Vagina (tissue), 2 donors: ENCODE measurements at regions of chr1 and their contacts with region 1.

Region 1: DNA sequence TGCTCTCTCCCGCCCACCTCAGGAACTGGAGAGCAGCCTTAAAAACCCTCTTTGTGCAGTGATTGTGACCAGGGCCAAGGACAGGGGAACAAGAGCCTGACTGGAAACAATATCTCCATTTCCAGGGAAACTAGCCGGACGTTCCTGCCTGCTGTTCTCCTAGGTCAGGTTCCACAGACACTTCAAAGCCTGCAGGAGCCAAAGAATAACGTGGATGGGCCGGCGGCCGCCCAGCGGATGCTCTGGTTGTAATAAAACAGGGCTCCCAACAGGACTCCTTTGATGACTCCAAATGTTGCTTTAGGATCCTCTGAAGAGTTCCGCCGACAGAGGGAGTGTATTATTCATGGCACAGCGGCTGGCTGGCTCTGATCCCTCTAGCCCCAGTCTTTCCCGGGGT is 162.2 kb downstream of the PLXNA2 start:
- DNase-seq: no peak
- H3K4me3 ChIP-seq: no peak overlapping the region
- H3K27ac ChIP-seq: no peak overlapping the region
- H3K4me1 ChIP-seq: peaks cover 15% of the 10 kb centered on the region
- H3K27me3 ChIP-seq: no peaks in the 10 kb centered on the region
- CTCF ChIP-seq: no peak
- POLR2A ChIP-seq: no peak

Region 2: GRCh38 chr1:208029381-208030287 is 52.3 kb before region 1 on chr1:
- intact Hi-C with region 1: loop called (anchors 10 kb)
- DNase-seq: no peak
- H3K4me3 ChIP-seq: no peak overlapping the region
- H3K27ac ChIP-seq: peak overlapping the region; percentile 78
- H3K4me1 ChIP-seq: peaks cover 39% of the 10 kb centered on the region
- H3K27me3 ChIP-seq: no peaks in the 10 kb centered on the region
- CTCF ChIP-seq: no peak
- POLR2A ChIP-seq: no peak

Region 3: DNA sequence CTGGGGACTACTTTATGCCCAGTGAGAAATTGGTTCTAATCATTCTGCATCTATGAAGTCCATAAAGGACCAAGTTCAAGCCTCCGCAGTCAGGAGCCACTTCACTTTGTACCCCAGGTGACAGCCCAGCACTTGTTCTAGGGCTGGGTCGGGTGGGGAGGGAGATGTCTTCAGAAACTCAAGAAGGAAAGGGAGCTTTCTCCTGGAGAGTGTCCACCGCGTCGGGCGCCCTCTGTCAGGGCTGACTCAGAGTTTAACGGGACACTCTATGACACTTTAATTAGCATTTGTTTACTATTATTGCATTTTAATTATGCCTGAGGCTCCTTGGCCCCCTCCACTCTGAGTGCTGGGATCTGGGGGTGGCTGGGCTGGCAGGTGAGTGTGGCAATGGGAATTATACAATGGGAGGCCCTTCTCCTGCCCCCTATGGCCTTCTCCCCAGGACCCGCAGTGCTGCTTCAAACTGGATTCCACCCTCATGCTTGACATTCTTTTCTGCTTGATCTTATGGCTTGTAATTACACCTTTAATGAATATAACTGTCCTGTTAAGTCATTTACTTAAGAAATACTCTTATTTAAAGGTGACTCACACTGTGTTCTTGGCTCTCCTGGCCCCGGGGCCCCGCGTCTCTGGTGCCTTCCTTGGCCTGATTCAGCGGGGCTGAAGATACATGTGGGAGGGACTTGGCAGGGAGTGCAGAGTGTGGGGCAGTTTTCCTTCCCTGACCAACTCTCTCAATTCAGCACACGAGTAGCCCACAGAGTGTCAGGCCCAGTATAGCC is 25.6 kb after region 1 on chr1:
- intact Hi-C with region 1: no loop called
- DNase-seq: no peak
- H3K4me3 ChIP-seq: no peak overlapping the region
- H3K27ac ChIP-seq: no peak overlapping the region
- H3K4me1 ChIP-seq: peaks cover 7% of the 10 kb centered on the region
- H3K27me3 ChIP-seq: no peaks in the 10 kb centered on the region
- CTCF ChIP-seq: no peak
- POLR2A ChIP-seq: no peak

Region 4: GRCh38 chr1:208243967-208244916 is 162.3 kb after region 1 on chr1 and contains the start of gene PLXNA2:
- intact Hi-C with region 1: loop called (anchors 5 kb)
- DNase-seq: no peak
- H3K4me3 ChIP-seq: peak within 1 kb of the TSS; percentile 74 to 81
- H3K27ac ChIP-seq: peak within 1 kb of the TSS; percentile 92
- H3K4me1 ChIP-seq: peaks cover 42% of the 10 kb centered on the region
- H3K27me3 ChIP-seq: no peaks in the 10 kb centered on the region
- CTCF ChIP-seq: no peak
- POLR2A ChIP-seq: peak in 1 of 2 donors; percentile 8
- total RNA-seq, gene PLXNA2: 38.3 TPM